Breast epithelium (tissue), 4 donors: ENCODE measurements at regions of chr20 and their contacts with region 1.

Region 1: GRCh38 chr20:22795871-22796270 is 211.5 kb upstream of the FOXA2 start:
- DNase-seq: peak in 1 of 2 donors; percentile 68
- H3K4me3 ChIP-seq: no peak overlapping the region
- H3K27ac ChIP-seq: peak overlapping the region; percentile 80 to 84
- H3K4me1 ChIP-seq: peaks cover 0 to 9% of the 10 kb centered on the region in 2 donors
- H3K27me3 ChIP-seq: no peaks in the 10 kb centered on the region
- CTCF ChIP-seq: no peak
- POLR2A ChIP-seq: no peak

Region 2: DNA sequence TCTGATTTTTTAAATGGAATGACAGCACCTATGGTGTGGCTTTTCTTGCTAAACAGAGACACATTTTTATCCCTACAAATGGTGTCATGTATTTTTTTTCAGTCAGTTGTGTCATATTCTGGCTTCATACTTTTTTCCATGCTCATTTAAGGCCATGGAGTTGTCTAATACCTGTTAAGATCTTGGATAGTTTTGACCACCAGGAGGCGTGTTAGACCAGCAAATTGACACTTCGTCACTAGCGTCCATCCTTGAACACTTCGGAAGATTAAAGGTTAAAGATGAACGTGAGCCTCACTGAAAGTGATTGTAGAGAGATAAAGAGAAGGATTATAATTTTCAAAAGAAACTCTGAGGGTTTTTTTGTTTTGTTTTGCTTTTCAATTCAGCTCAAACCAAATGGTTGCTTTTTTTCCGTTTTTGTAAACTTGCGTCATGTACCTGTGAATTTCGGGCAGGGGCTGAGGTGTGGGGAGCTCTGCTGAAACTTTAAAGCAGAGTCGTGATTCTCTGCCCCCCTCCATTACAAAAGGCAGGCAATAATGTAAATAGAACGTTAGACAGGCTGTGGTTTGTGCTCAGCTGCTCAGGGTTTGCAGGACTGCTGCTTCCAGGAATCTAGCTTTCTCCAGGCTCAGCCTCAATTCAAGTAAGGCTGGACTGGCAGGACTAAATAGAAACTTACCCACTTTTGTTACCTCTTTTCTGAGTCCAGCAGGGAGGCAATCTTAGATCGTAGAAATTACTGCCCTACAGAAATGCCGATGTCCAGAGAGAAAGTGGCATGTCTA is 456.6 kb before region 1 on chr20:
- intact Hi-C with region 1: loop called (anchors 5 kb)
- DNase-seq: no peak
- H3K4me3 ChIP-seq: no peak overlapping the region
- H3K27ac ChIP-seq: no peak overlapping the region
- H3K4me1 ChIP-seq: no peaks in the 10 kb centered on the region
- H3K27me3 ChIP-seq: no peaks in the 10 kb centered on the region
- CTCF ChIP-seq: peak; percentile 32 to 78 (median 72)
- POLR2A ChIP-seq: no peak

Region 3: DNA sequence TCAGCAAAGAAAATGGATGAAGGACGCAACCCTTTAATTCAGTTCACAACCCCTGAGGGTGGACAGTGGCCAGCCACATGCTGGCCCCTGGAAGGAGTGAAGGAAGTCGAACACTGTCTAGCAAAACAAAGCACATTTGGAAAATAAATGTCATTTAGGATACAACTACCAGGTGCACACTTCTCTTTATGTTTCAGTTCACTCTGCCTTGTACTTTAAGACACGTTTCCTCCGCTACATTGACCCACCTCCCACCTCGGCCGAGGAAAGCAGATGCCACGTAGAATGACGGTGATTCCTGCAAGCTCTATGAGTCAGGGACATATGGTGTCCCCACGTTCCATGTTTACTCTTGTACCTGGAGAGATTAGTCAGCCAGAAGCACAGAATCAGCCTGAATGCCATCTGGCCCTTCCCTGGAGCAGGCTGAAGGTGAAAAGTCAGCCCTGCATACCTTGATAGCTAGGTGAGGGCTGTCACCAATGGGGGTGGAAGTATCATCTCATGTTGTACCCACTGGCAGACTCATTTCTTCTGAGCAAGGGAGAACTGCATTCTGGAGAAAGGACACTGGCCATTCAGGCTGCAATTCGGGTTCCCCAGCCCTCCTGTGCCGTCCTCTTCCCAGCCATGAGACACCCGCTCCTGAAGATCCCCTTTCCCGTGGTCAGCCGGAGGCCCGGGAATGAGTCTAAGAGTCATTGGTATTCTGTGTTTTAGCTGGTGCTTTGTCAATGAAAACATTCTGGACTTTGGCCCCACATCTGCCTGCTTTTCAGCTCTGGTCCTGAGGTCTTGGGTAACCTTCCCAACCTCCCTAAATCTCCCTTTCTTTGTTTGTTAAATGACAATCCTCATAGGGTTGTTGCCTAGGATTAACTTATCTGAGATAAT is 272.1 kb before region 1 on chr20:
- intact Hi-C with region 1: no loop called
- DNase-seq: no peak
- H3K4me3 ChIP-seq: no peak overlapping the region
- H3K27ac ChIP-seq: no peak overlapping the region
- H3K4me1 ChIP-seq: no peaks in the 10 kb centered on the region
- H3K27me3 ChIP-seq: peaks cover 0 to 4% of the 10 kb centered on the region in 2 donors
- CTCF ChIP-seq: no peak
- POLR2A ChIP-seq: no peak

Region 4: GRCh38 chr20:22763257-22763906 is 32.5 kb before region 1 on chr20:
- intact Hi-C with region 1: loop called (anchors 1 kb)
- DNase-seq: peak in 1 of 2 donors; percentile 67
- H3K4me3 ChIP-seq: peak overlapping the region in 1 of 3 donors; percentile 39
- H3K27ac ChIP-seq: peak overlapping the region; percentile 66 to 91
- H3K4me1 ChIP-seq: no peaks in the 10 kb centered on the region
- H3K27me3 ChIP-seq: no peaks in the 10 kb centered on the region
- CTCF ChIP-seq: no peak
- POLR2A ChIP-seq: no peak

Region 5: DNA sequence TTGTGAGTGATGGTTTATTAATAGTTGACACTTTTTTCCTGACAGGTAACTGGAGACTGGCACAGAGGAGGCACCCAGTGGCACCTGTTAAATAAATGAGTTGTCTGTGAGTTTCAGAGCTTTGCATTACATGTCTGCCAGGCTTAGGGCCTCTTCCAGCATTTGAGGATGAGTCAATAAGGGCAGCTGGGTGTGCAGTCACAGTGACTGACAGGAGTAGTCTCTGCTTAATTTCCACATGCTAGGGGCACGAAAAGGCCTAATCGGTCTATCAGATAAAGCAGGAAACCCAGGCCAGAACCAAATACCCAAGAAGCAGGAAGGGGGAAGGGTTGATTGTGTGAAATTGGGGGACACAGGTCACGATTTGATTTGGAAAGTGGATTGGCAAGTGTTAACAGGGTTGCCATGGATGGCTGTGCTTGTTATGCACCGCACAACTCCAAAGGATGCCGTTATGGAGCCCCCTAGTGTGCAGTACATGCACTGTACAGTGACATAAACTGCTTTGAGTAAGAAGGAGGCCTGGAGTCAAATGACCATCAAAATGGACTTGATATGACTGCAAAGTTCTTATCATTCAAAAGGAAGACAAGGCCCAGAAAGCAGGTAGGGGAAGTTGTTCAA is 1304.6 kb after region 1 on chr20:
- intact Hi-C with region 1: no loop called
- DNase-seq: no peak
- H3K4me3 ChIP-seq: no peak overlapping the region
- H3K27ac ChIP-seq: no peak overlapping the region
- H3K4me1 ChIP-seq: no peaks in the 10 kb centered on the region
- H3K27me3 ChIP-seq: no peaks in the 10 kb centered on the region
- CTCF ChIP-seq: peak in 1 of 3 donors; percentile 28
- POLR2A ChIP-seq: no peak